ENCODE measurements at regions of chr14 and their contacts with region 1.

Region 1: GRCh38 chr14:54773171-54773975 is 129.3 kb downstream of the GCH1 start:
- DNase-seq: peak; percentile 20 to 60 (median 40)
- H3K4me3 ChIP-seq: peak overlapping the region; percentile 25
- H3K4me3 Mint-ChIP-seq: peak overlapping the region in 5 of 7 donors; percentile 1 to 75 (median 24)
- H3K27ac ChIP-seq: no peak overlapping the region
- H3K27ac Mint-ChIP-seq: peak overlapping the region in 6 of 8 donors; percentile 3 to 74 (median 38)
- H3K4me1 ChIP-seq: peaks cover 21% of the 10 kb centered on the region
- H3K4me1 Mint-ChIP-seq: peaks cover 25 to 33% (median 31%) of the 10 kb centered on the region in 3 donors
- H3K27me3 ChIP-seq: no peaks in the 10 kb centered on the region
- H3K27me3 Mint-ChIP-seq: peaks cover 10 to 18% of the 10 kb centered on the region in 2 donors

Region 2: DNA sequence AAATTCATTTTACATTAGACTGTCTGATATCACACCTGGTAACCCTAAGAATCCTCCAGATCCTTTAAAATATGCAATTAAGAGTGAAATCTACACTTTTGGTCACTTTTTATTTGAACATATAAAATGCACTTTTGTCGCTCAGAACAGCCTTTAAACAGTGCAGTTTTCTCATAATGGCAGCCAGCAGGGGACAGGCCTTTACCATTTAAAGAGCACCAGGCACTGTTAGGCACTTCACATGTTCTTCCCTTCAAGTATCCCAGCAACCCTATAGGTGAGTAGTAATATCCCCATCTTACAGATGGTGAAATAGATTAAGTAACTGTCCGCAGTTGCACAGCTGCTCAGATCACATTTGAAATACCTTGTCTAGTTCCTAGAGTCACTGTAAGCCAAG is 217.7 kb before region 1 on chr14:
- CTCF ChIA-PET with region 1: interaction called, 15 read pairs
- POLR2A ChIA-PET with region 1: no interaction called
- DNase-seq: no peak
- H3K4me3 ChIP-seq: no peak overlapping the region
- H3K4me3 Mint-ChIP-seq: no peak overlapping the region
- H3K27ac ChIP-seq: no peak overlapping the region
- H3K27ac Mint-ChIP-seq: no peak overlapping the region
- H3K4me1 ChIP-seq: no peaks in the 10 kb centered on the region
- H3K4me1 Mint-ChIP-seq: no peaks in the 10 kb centered on the region
- H3K27me3 ChIP-seq: no peaks in the 10 kb centered on the region
- H3K27me3 Mint-ChIP-seq: peaks cover 11 to 33% of the 10 kb centered on the region in 2 donors

Measured in CD8-positive, alpha-beta memory T cell (primary cell).